HCT116 (cell line): ENCODE measurements at regions of chr10 and their contacts with region 1.

Region 1: GRCh38 chr10:96743988-96744585 is 23.8 kb upstream of the PIK3AP1 start:
- DNase-seq: no peak
- ATAC-seq: peak; percentile 63
- H3K4me3 ChIP-seq: no peak overlapping the region
- H3K27ac ChIP-seq: no peak overlapping the region
- H3K4me1 ChIP-seq: no peaks in the 10 kb centered on the region
- H3K27me3 ChIP-seq: no peaks in the 10 kb centered on the region
- CTCF ChIP-seq: peak; percentile 16 to 52 (median 41); a peak in 3 of 6 replicates
- POLR2A ChIP-seq: no peak
- RAD21 ChIP-seq: peak; percentile 64

Region 2: DNA sequence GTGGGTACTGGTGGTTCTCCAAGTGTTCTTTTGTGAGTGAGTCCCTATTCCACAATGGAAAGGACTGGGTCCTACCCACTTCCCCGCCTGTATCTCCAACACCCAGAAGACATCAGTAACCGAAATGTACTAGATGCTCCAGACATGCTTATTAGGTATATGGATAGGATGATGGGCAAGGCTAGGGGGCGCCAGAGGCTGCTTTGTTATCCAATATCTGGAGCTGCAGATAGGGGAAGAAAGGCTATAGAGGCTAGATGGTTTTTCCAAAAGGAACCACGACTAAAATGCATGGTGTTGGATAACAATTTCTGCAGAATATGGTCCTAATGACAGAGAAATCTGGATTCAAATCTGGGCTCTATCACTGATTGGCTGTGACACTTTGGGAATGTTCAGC is 101.1 kb before region 1 on chr10:
- CTCF ChIA-PET with region 1: interaction called, 9 read pairs
- POLR2A ChIA-PET with region 1: no interaction called
- RAD21 ChIA-PET with region 1: interaction called in 1 of 2 experiments, 5 read pairs
- intact Hi-C with region 1: loop called (anchors 1 kb)
- DNase-seq: peak; percentile 31
- ATAC-seq: peak; percentile 68
- H3K4me3 ChIP-seq: no peak overlapping the region
- H3K27ac ChIP-seq: no peak overlapping the region
- H3K4me1 ChIP-seq: peaks cover 3 to 22% of the 10 kb centered on the region in 2 experiments; a peak in 3 of 4 replicates
- H3K27me3 ChIP-seq: no peaks in the 10 kb centered on the region
- CTCF ChIP-seq: peak; percentile 69 to 77 (median 71); a peak in 5 of 6 replicates
- POLR2A ChIP-seq: no peak
- RAD21 ChIP-seq: peak; percentile 80

Region 3: GRCh38 chr10:96803318-96803664 is 59.2 kb after region 1 on chr10:
- CTCF ChIA-PET with region 1: no interaction called
- POLR2A ChIA-PET with region 1: no interaction called
- RAD21 ChIA-PET with region 1: no interaction called
- intact Hi-C with region 1: no loop called
- DNase-seq: no peak
- ATAC-seq: no peak
- H3K4me3 ChIP-seq: no peak overlapping the region
- H3K27ac ChIP-seq: no peak overlapping the region
- H3K4me1 ChIP-seq: no peaks in the 10 kb centered on the region; a peak in 1 of 4 replicates
- H3K27me3 ChIP-seq: no peaks in the 10 kb centered on the region
- CTCF ChIP-seq: no peak
- POLR2A ChIP-seq: no peak
- RAD21 ChIP-seq: no peak